Naive thymus-derived CD4-positive, alpha-beta T cell (primary cell): ENCODE measurements at regions of chr13 and their contacts with region 1.

Region 1: DNA sequence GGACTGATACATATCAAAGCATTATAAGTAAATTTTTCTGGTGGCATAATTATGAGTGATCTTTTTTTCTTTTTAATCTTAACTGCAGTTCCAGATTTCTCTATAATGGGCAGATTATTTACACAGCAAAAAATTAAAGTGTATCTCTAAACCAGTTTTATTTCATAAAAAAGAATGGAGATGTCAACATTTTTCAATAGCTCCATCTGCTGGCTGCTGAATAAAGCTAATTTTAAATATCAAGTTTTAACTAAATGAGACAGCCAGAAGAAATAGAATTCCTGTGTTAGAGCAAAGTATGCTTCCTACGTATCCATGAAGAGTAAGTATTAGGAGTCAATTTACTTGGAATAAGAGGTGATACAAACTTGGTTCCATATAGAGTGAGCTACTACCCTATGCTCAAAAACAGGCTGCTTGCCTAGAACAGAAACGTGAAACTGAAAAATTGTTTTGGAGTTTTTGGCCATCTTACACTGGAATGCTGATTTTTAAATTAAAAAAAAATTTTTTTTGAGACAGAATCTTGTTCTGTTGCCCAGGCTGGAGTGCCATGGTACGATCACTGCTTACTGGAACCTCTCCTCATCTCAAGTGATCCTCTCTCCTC is 5.0 kb upstream of the PDS5B start:
- DNase-seq: peak in 6 of 9 donors; percentile 5 to 37 (median 22)
- ATAC-seq: no peak
- H3K4me3 ChIP-seq: no peak overlapping the region
- H3K4me3 Mint-ChIP-seq: no peak overlapping the region
- H3K27ac ChIP-seq: no peak overlapping the region
- H3K27ac Mint-ChIP-seq: no peak overlapping the region
- H3K4me1 ChIP-seq: peaks cover 4 to 5% of the 10 kb centered on the region in 2 donors
- H3K4me1 Mint-ChIP-seq: peaks cover 6 to 10% (median 9%) of the 10 kb centered on the region in 7 donors
- H3K27me3 ChIP-seq: no peaks in the 10 kb centered on the region
- H3K27me3 Mint-ChIP-seq: peaks cover 0 to 22% (median 0%) of the 10 kb centered on the region in 5 donors

Region 2: DNA sequence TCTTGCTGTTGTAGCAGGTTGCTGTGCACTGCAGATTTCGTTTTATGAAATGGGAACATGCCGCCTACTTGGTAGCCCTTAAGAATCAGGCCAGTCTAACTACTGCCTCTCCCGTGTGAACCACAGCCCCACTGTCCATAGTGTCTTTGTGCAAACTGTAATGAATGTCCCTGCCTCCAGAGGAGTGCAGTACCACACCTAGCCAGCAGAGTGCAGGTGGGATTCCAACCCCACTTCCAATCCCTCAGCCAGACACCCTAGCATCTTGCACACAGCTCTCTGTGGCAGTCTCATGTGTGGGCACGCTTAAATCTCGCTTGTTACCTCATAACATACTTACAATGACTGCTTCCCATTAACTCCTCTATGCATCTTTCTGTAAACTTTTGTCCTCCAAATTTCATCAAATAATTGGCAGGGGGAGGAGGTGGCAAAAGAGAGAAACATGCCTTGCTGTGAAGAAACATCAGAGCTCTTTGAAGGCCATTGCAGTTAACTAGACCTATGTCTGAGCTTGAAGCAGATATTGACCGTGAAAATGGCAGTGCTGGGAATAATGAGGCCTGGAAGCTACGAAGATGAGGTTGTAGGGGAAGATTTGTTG is 313.3 kb before region 1 on chr13:
- CTCF ChIA-PET with region 1: no interaction called
- POLR2A ChIA-PET with region 1: no interaction called
- intact Hi-C with region 1: loop called (anchors 1 to 2 kb)
- DNase-seq: peak; percentile 13 to 56 (median 35)
- ATAC-seq: peak; percentile 76
- H3K4me3 ChIP-seq: no peak overlapping the region
- H3K4me3 Mint-ChIP-seq: no peak overlapping the region
- H3K27ac ChIP-seq: no peak overlapping the region
- H3K27ac Mint-ChIP-seq: peak overlapping the region in 1 of 9 donors; percentile 46
- H3K4me1 ChIP-seq: no peaks in the 10 kb centered on the region
- H3K4me1 Mint-ChIP-seq: no peaks in the 10 kb centered on the region
- H3K27me3 ChIP-seq: no peaks in the 10 kb centered on the region
- H3K27me3 Mint-ChIP-seq: no peaks in the 10 kb centered on the region

Region 3: DNA sequence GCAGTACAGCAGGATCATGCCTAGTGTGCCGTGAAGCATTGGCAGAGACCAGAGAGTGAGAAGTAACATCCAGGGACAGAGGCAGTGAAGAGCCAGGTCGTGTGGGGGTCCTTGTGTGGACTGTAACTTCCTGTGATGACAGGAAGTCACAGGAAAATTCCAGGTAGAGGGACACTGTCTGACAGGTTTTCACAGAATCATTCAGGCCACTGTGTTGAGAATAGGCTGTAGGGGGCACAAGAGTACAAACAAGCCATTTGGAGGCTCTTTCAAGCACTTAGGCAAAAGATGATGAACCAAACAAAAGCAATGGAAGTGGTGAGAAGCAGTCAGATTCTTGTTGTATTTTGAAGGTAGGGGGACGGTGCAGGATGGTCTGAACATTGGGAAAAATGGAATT is 199.7 kb before region 1 on chr13:
- CTCF ChIA-PET with region 1: interaction called, 5 read pairs
- POLR2A ChIA-PET with region 1: no interaction called
- intact Hi-C with region 1: loop called (anchors 1 kb)
- DNase-seq: peak in 6 of 9 donors; percentile 5 to 41 (median 24)
- ATAC-seq: peak; percentile 73
- H3K4me3 ChIP-seq: no peak overlapping the region
- H3K4me3 Mint-ChIP-seq: no peak overlapping the region
- H3K27ac ChIP-seq: no peak overlapping the region
- H3K27ac Mint-ChIP-seq: no peak overlapping the region
- H3K4me1 ChIP-seq: no peaks in the 10 kb centered on the region
- H3K4me1 Mint-ChIP-seq: peaks cover 0 to under 1% (median 0%) of the 10 kb centered on the region in 7 donors
- H3K27me3 ChIP-seq: no peaks in the 10 kb centered on the region
- H3K27me3 Mint-ChIP-seq: no peaks in the 10 kb centered on the region

Region 4: DNA sequence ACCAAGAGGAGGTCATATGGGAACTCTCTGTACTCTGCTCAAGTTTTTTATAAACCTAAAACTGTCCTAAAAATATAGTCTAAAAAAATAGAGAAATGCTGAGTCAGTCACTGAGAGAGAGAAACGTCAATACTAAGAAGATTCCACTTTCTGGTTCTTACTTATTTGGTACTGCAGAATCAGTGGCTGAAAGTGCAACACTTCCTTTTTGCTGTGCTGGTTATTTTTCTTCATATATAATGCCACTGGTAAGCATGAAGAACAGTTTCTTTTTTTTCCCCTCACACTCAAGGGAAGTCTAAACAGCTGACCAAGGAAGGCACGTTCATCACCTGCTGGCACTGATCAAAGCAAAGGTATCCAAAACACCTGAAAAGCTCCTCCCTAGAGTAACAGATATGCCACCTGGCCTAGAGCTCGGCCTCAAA is 109.1 kb before region 1 on chr13:
- CTCF ChIA-PET with region 1: interaction called, 7 read pairs
- POLR2A ChIA-PET with region 1: no interaction called
- intact Hi-C with region 1: loop called (anchors 1 to 2 kb)
- DNase-seq: no peak
- ATAC-seq: no peak
- H3K4me3 ChIP-seq: no peak overlapping the region
- H3K4me3 Mint-ChIP-seq: no peak overlapping the region
- H3K27ac ChIP-seq: no peak overlapping the region
- H3K27ac Mint-ChIP-seq: peak overlapping the region in 2 of 9 donors; percentile 41 to 64
- H3K4me1 ChIP-seq: no peaks in the 10 kb centered on the region
- H3K4me1 Mint-ChIP-seq: peaks cover 0 to 17% (median 0%) of the 10 kb centered on the region in 7 donors
- H3K27me3 ChIP-seq: no peaks in the 10 kb centered on the region
- H3K27me3 Mint-ChIP-seq: no peaks in the 10 kb centered on the region